Posterior vena cava (tissue), 2 donors: ENCODE measurements at regions of chr10 and their contacts with region 1.

Region 1: DNA sequence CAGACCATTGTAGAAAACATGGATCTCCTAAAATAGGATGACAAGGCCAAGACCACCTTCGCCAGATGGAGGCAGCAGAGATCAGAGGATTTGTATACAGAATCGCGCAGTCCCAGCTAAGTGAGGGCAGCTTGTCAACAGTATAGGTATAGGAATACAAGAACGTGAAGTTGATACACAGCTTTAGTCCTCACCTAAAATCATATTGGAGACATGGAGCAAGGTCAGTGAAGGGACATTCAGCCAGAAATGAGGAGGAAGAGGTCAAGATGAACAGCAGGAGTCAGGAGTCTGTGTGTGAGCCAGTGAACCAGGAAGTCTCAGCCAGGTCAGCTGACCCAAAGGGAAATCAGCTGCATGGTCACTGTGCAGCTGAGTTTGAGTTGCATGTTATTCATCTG is 263.4 kb upstream of the PRKCQ start:
- DNase-seq: no peak

Region 2: DNA sequence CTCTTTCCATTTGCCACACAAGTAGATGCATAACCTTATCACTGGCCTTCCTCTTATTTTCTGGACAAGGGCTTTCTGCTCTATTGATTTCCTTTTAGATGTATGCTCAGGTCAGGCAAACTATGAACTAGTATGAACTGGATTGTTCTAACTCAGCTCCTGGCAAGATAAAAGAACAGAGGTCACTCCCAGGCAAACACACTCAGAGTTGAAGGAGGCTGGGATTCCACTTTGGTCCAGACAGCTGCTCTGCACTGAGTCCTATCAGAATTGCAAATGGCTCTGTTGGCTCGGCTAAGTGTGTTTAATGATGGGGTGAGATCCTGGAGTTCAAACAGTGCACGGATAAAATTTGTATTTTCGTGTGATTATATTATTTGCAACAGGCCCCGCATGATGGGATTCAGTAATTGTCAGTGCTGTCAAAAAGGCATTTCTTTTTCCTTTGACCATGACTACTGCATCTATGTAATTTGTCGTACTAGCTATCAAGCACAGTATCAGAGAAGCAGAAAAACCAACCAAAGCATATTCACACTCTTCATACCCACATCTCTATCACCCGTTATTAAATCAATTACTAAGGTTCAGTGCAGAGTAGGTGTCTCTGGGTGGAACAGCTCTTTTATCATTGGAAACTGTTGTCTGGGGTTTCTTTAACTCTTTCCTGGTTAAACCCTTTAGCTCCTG is 24.7 kb after region 1 on chr10:
- intact Hi-C with region 1: no loop called
- DNase-seq: no peak

Region 3: DNA sequence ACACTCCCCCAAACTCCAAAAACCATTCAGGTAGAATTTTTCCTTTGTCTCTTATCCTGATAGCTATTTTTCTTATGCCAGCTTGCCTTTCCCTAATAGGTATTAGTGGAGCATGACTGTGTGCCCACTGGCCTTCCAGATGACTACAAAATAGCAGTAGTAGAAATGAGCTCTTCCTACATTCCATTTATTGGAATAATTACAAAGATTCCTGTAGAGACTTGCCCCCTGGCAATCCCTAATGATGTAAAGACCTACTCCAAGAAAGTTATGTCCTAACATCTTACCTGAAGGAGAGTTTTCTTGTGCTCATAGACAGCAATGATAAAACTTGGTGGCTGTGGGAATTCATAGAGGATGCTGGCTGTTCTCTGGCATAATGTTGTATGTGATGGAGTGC is 1712.8 kb after region 1 on chr10:
- intact Hi-C with region 1: loop called in 1 of 2 experiments (anchors 5 kb)
- DNase-seq: no peak